ENCODE measurements at regions of chr17 and their contacts with region 1.

Region 1: DNA sequence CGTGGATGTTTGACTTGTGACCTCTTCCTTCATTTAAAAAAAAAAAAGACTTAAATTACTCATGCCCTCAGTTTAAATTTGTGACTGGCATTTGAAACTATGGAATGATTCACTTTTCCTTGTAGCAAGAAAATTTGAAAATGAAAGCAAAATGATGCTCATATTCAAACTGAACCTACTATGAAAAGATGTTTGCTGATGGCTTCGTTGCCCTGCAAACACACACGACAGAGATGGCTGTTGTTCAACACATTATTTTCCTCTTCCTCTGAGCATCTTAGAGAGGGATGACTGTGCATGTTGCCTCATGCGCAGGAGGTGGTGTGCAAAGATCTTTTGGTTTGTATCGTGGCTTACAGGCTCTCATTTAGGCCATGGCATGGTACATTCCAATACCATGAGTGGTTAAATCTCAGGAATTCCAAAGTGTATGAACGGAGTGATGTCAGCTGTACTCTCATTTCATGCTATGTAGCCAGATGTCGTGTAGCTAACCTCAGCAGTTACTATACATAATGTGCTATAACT is 164.5 kb downstream of the PRKCA start:
- DNase-seq: peak; percentile 66 to 77 (median 71)
- H3K4me3 ChIP-seq: peak overlapping the region in 2 of 3 experiments; percentile 34 to 69
- H3K4me3 Mint-ChIP-seq: peak overlapping the region; percentile 27 to 60
- H3K27ac ChIP-seq: peak overlapping the region in 1 of 2 donors; percentile 79
- H3K27ac Mint-ChIP-seq: peak overlapping the region; percentile 70 to 92 (median 88)
- H3K4me1 ChIP-seq: peaks cover 83 to 90% of the 10 kb centered on the region in 2 donors
- H3K4me1 Mint-ChIP-seq: peaks cover 84% of the 10 kb centered on the region
- H3K27me3 ChIP-seq: no peaks in the 10 kb centered on the region
- H3K27me3 Mint-ChIP-seq: no peaks in the 10 kb centered on the region
- CTCF ChIP-seq: no peak

Region 2: GRCh38 chr17:66431910-66432683 is 34.8 kb before region 1 on chr17:
- intact Hi-C with region 1: loop called (anchors 5 kb)
- DNase-seq: peak in 2 of 3 donors; percentile 64 to 71
- H3K4me3 ChIP-seq: no peak overlapping the region
- H3K4me3 Mint-ChIP-seq: peak overlapping the region in 1 of 2 donors; percentile 6
- H3K27ac ChIP-seq: peak overlapping the region; percentile 63 to 85
- H3K27ac Mint-ChIP-seq: peak overlapping the region; percentile 89 to 95 (median 92)
- H3K4me1 ChIP-seq: peaks cover 71 to 77% of the 10 kb centered on the region in 2 donors
- H3K4me1 Mint-ChIP-seq: peaks cover 58% of the 10 kb centered on the region
- H3K27me3 ChIP-seq: no peaks in the 10 kb centered on the region
- H3K27me3 Mint-ChIP-seq: no peaks in the 10 kb centered on the region
- CTCF ChIP-seq: no peak